Activated CD8-positive, alpha-beta T cell treated with anti-CD3 and anti-CD28 coated beads, Interleukin-2, amount 10 ng/mL, durations not matched to agents 7 days and 5 days (primary cell): ENCODE measurements at regions of chr15 and their contacts with region 1.

Region 1: GRCh38 chr15:89442671-89443307 is 53.6 kb downstream of the RHCG start:
- DNase-seq: peak; percentile 70
- ATAC-seq: peak; percentile 60
- H3K4me3 Mint-ChIP-seq: no peak overlapping the region
- H3K27ac Mint-ChIP-seq: no peak overlapping the region
- H3K4me1 Mint-ChIP-seq: peaks cover 5% of the 10 kb centered on the region
- H3K27me3 Mint-ChIP-seq: peaks cover 10% of the 10 kb centered on the region

Region 2: DNA sequence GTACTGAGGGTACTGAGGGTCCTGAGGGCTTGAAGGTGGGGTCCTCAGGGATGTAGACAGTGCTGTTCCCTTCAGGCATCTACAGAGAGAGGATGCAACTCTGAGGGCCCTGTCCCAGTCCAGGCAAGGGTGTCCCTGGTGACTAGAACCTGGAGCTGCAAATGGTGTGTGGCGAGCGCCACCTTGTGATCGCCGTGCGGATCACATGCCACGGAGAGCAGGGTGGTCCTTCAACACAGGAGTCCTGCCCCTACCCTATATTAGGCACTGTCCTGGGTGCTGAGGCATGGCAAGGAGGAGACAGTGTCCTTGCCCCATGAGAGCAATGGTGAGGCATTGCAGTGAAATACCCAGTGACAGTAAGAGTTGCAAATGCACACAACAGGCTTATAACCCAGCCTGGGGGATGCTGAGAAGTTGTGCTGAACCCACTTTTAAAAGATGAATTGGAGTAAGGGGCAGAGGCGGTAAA is 30.0 kb after region 1 on chr15:
- CTCF ChIA-PET with region 1: interaction called, 21 read pairs
- POLR2A ChIA-PET with region 1: no interaction called
- DNase-seq: peak; percentile 60
- ATAC-seq: peak; percentile 75
- H3K4me3 Mint-ChIP-seq: no peak overlapping the region
- H3K27ac Mint-ChIP-seq: no peak overlapping the region
- H3K4me1 Mint-ChIP-seq: no peaks in the 10 kb centered on the region
- H3K27me3 Mint-ChIP-seq: peaks cover 26% of the 10 kb centered on the region